Ascending aorta (tissue), 2 donors: ENCODE measurements at regions of chr3 and their contacts with region 1.

Region 1: DNA sequence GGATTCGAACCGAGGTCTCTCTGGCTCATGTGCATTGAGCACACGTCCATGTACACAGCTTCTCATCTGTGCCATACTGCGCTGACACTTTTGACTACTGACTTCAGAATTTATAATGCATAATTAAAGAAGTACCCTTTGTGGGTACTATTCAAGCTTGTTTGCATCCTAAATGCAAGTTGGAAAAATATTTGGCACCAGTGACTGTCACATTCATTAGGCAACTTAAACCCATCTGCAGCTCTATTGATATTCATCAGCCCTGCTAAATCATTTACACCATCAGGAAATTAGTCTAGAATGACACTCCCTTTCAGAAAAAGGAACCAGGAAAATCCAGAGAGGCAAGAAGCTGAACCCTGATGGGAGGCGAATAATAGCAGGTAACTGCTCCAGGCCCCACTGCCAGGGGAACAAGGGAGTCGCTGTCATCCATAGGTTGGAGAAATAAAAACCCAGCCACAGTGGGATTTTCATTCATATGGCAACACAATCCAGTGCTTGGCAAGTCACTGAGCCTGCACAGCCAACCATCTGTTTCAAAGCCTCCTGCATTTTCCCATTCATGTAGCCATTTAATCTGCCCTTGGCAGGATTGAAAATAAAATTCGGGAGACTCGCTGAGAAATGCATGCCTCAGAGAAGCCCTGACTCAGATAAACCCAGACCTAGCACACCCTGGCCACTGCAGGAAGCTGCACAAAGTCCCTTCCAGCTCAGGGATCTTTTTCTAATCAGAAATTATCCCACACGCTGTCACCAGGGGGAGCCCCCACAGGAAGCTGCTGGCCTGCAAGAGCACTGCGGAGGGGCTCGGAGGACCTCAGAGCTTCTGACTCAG is 103.0 kb upstream of the VEPH1 start:
- DNase-seq: peak in 1 of 2 donors; percentile 71
- H3K4me3 ChIP-seq: no peak overlapping the region
- H3K27ac ChIP-seq: no peak overlapping the region
- H3K4me1 ChIP-seq: peaks cover 0 to 2% of the 10 kb centered on the region in 2 donors
- H3K27me3 ChIP-seq: no peaks in the 10 kb centered on the region
- CTCF ChIP-seq: peak; percentile 44 to 78 (median 58)

Region 2: DNA sequence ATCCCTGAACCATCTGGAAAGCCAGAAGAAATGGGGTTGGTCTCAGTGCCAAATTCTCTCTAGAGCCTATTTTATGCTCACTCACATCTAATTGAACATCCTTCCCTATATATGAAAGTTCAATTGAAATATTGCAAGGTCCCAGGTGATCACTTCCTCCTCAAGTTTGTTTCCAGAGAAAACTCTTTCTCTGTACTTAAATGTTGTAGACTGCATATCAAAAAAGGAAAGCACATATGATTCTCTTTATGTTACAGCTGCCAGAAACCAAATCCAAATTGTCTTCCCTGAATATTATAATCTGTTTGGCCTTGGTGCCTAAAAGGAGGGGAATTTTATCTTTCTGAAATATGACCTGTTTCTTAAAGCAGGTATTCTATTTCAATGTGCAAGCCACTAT is 406.7 kb after region 1 on chr3:
- intact Hi-C with region 1: no loop called
- DNase-seq: no peak
- H3K4me3 ChIP-seq: no peak overlapping the region
- H3K27ac ChIP-seq: no peak overlapping the region
- H3K4me1 ChIP-seq: no peaks in the 10 kb centered on the region
- H3K27me3 ChIP-seq: no peaks in the 10 kb centered on the region
- CTCF ChIP-seq: no peak

Region 3: DNA sequence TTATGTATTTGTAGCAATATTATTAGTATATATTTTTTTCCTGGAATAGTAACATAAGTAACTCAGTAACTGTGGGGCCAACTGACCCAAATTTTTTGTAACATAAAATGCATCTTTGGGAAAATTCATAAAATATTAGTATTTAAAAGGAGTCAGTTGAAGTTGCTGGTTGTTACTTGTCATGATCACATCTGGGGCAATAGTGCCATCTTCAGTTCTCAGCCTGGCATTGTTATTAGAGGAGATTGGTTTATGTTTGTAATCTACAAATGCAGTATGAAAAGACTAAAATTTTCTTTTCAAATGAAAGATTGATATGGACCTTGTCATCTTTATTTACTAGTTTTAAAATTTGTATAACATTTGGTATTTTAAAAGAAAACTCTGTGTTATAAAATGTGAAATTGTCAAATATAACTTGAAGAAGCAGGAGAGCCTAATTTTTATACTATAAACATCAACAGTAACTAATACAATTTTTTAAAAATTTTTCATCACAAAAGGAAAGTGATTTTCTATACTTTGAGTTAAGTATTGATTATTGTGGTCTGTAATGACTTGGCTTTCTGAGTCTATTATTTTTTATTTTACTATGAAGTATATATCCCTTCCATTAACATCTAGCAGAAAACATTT is 926.0 kb after region 1 on chr3:
- intact Hi-C with region 1: loop called (anchors 5 kb)
- DNase-seq: no peak
- H3K4me3 ChIP-seq: no peak overlapping the region
- H3K27ac ChIP-seq: no peak overlapping the region
- H3K4me1 ChIP-seq: no peaks in the 10 kb centered on the region
- H3K27me3 ChIP-seq: no peaks in the 10 kb centered on the region
- CTCF ChIP-seq: peak in 2 of 3 experiments; percentile 31 to 48